Esophagus muscularis mucosa (tissue), 4 donors: ENCODE measurements at regions of chr3 and their contacts with region 1.

Region 1: GRCh38 chr3:42229942-42230688 is 35.9 kb downstream of the CCK start:
- DNase-seq: no peak
- H3K4me3 ChIP-seq: peak overlapping the region in 3 of 4 donors; percentile 17 to 28 (median 19)
- H3K27ac ChIP-seq: no peak overlapping the region
- H3K4me1 ChIP-seq: peaks cover 0 to 15% (median 12%) of the 10 kb centered on the region in 4 donors
- H3K27me3 ChIP-seq: peaks cover 0 to 5% (median 0%) of the 10 kb centered on the region in 4 donors
- CTCF ChIP-seq: peak; percentile 44 to 59 (median 52)
- EP300 ChIP-seq: no peak
- POLR2A ChIP-seq: no peak

Region 2: GRCh38 chr3:42547401-42547945 is 317.4 kb after region 1 on chr3:
- intact Hi-C with region 1: loop called (anchors 5 kb)
- DNase-seq: no peak
- H3K4me3 ChIP-seq: no peak overlapping the region
- H3K27ac ChIP-seq: no peak overlapping the region
- H3K4me1 ChIP-seq: peaks cover 14 to 34% (median 29%) of the 10 kb centered on the region in 4 donors
- H3K27me3 ChIP-seq: peaks cover 0 to 4% (median 0%) of the 10 kb centered on the region in 4 donors
- CTCF ChIP-seq: peak; percentile 82 to 96 (median 94)
- EP300 ChIP-seq: no peak
- POLR2A ChIP-seq: no peak